Activated CD8-positive, alpha-beta T cell treated with anti-CD3 and anti-CD28 coated beads, Interleukin-2, amount 10 ng/mL, durations not matched to agents 7 days and 5 days (primary cell): ENCODE measurements at regions of chr6 and their contacts with region 1.

Region 1: GRCh38 chr6:105431226-105431625 is 28.3 kb upstream of the PREP start:
- DNase-seq: peak; percentile 51
- ATAC-seq: no peak
- H3K4me3 Mint-ChIP-seq: no peak overlapping the region
- H3K27ac Mint-ChIP-seq: no peak overlapping the region
- H3K4me1 Mint-ChIP-seq: no peaks in the 10 kb centered on the region
- H3K27me3 Mint-ChIP-seq: peaks cover 12% of the 10 kb centered on the region

Region 2: GRCh38 chr6:105087571-105088211 is 343.5 kb before region 1 on chr6:
- CTCF ChIA-PET with region 1: interaction called, 17 read pairs
- POLR2A ChIA-PET with region 1: no interaction called
- DNase-seq: peak; percentile 53
- ATAC-seq: no peak
- H3K4me3 Mint-ChIP-seq: no peak overlapping the region
- H3K27ac Mint-ChIP-seq: no peak overlapping the region
- H3K4me1 Mint-ChIP-seq: no peaks in the 10 kb centered on the region
- H3K27me3 Mint-ChIP-seq: peaks cover 11% of the 10 kb centered on the region

Region 3: DNA sequence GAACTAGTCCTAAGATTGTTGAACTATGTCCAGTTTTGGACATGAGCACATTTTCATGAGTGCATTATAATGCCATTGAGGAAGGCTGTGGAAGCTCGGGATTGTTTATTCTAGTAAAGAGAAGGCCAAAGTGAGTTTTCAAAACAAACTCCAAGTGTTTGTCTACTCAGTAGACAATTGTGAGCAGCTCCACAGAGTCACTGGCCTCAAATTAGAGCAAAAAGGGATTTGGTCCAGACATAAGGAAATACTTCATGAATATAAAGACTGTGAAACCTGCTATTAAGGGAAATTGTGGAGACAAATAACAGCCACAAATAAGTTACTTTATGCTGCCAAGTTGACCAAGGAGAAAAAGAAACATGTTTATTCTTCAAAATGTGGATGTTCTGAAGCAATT is 14.3 kb after region 1 on chr6:
- CTCF ChIA-PET with region 1: interaction called, 23 read pairs
- POLR2A ChIA-PET with region 1: no interaction called
- DNase-seq: no peak
- ATAC-seq: no peak
- H3K4me3 Mint-ChIP-seq: no peak overlapping the region
- H3K27ac Mint-ChIP-seq: no peak overlapping the region
- H3K4me1 Mint-ChIP-seq: no peaks in the 10 kb centered on the region
- H3K27me3 Mint-ChIP-seq: peaks cover 2% of the 10 kb centered on the region

Region 4: DNA sequence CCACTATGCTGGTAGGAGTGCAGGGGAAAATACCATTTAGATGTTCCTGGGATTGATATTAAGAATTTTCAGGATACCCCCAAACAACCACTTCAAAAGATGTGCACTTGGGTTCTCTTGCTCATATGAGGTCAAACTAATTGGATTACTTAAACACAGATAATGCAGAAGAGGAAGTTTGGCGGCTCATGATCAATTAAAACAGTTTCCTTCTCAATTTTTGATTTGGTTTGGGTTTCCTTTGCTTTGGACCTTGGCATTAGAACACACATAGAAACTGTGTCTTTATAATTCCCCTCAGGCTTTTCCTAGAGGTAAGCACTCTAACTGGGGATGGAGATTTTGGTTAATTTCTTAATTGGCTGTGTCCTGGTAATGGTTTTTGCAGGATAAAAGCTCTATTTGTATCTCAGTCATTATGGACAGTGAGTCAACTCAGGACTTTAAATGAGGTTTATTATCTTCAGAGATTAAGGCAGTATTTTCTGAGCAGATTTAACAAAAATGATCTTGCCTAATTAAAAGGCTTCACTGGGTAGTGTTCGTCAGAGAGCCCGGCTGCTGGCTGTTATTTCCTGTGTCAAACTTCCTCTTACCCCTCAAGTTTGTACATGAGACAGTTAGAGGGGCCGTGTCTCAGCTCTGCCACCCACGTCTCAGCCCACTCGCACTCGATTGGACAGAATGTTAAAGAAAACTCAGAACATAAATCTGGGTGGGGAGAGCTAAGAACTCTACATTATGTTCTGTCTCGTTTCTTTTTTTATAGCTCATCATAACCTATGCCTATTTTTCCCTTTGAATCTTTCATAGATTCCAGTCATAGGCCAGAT is 21.9 kb after region 1 on chr6:
- CTCF ChIA-PET with region 1: interaction called, 26 read pairs
- POLR2A ChIA-PET with region 1: no interaction called
- DNase-seq: peak; percentile 59
- ATAC-seq: peak; percentile 93
- H3K4me3 Mint-ChIP-seq: peak overlapping the region; percentile 45
- H3K27ac Mint-ChIP-seq: peak overlapping the region; percentile 72
- H3K4me1 Mint-ChIP-seq: peaks cover 17% of the 10 kb centered on the region
- H3K27me3 Mint-ChIP-seq: peaks cover 4% of the 10 kb centered on the region

Region 5: GRCh38 chr6:105484238-105485161 is 53.3 kb after region 1 on chr6:
- CTCF ChIA-PET with region 1: interaction called, 29 read pairs
- POLR2A ChIA-PET with region 1: no interaction called
- DNase-seq: no peak
- ATAC-seq: peak; percentile 51
- H3K4me3 Mint-ChIP-seq: peak overlapping the region; percentile 12
- H3K27ac Mint-ChIP-seq: peak overlapping the region; percentile 7
- H3K4me1 Mint-ChIP-seq: peaks cover 47% of the 10 kb centered on the region
- H3K27me3 Mint-ChIP-seq: peaks cover 2% of the 10 kb centered on the region

Region 6: DNA sequence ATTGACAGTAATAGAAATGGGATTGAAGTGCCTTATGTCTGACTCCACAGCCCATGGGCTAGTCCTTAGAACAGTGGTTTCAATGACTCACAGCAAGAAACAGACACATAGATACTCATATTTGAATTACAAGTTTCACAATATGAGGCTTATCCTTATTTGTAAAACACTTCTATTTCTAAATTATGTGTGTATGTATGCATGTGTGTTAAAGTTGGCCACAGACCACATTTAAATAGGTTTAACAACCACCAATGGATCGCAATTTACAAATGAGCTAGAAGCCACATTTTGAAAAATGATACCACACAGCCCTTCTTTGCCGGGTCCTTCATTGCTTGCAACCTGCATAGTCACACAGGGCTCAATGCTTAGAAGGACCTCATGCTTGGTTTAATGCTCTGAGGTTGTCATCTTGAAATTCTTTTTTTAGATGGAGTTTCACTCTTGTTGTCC is 129.4 kb after region 1 on chr6:
- CTCF ChIA-PET with region 1: no interaction called
- POLR2A ChIA-PET with region 1: no interaction called
- DNase-seq: no peak
- ATAC-seq: peak; percentile 36
- H3K4me3 Mint-ChIP-seq: no peak overlapping the region
- H3K27ac Mint-ChIP-seq: no peak overlapping the region
- H3K4me1 Mint-ChIP-seq: peaks cover 4% of the 10 kb centered on the region
- H3K27me3 Mint-ChIP-seq: peaks cover 12% of the 10 kb centered on the region

Region 7: DNA sequence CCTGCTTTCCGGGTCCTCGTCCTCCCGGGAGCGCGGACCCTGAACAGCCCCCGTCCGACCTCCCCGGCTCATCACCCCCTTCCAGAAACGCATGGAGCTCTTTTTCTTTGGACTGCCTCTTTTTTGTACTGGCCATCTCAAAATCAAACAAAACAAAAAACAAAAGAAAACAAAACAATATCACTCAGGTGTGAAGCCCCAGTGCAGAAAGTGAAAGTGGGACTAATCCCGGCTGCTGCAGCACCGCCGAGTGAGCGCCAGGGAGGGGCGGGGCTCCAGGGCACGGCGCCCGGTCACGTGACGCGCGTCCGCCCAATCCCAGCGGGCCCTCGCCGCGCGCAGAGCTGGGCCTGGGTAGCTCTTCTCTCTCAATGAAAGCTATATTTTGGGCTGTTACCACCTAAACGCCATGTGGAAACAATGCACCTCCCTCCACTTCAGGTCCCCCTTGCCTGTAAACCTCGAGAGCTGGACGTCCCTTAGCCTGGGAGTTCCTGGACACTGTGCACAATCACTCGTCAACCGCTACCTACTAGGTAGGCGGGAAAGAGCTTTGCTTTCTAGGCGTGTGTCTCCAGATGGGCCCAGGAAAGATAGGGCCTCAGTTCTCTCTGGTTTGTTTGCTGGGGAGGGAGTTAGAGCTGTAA is 561.2 kb after region 1 on chr6:
- CTCF ChIA-PET with region 1: interaction called, 10 read pairs
- POLR2A ChIA-PET with region 1: no interaction called
- DNase-seq: peak; percentile 92
- ATAC-seq: peak; percentile 90
- H3K4me3 Mint-ChIP-seq: peak overlapping the region; percentile 95
- H3K27ac Mint-ChIP-seq: peak overlapping the region; percentile 90
- H3K4me1 Mint-ChIP-seq: peaks cover 49% of the 10 kb centered on the region
- H3K27me3 Mint-ChIP-seq: peaks cover 64% of the 10 kb centered on the region

Region 8: DNA sequence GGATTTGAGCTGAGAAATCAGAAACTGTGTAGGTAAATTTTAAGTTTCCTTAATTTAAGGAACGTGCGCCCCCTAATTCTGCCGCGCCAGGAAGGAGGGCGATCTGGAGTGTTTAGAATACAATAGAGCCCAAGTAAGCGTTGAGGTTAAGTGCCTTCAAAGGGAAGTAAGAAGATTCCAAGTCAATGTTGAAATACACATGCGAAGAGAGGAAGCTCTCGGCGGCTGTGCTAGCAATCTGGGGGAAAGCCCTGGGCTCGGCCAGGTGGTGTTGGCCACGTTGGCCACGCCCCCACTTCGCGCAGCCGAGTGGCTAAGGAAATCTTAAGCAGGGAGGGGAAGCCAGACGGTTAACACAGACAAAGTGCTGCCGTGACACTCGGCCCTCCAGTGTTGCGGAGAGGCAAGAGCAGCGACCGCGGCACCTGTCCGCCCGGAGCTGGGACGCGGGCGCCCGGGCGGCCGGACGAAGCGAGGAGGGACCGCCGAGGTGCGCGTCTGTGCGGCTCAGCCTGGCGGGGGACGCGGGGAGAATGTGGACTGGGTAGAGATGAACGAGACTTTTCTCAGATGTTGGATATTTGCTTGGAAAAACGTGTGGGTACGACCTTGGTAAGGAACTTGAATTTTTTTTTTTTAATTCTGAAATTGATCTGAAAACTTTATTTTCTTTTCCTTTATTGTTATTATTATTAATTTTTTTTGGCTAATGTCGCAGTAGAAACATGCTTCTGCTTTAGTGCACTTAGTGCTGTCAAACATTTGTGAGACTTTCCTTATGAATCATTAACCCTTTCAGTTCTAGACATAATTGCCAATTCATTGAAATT is 655.0 kb after region 1 on chr6 and contains the start of gene PRDM1:
- CTCF ChIA-PET with region 1: interaction called, 19 read pairs
- POLR2A ChIA-PET with region 1: no interaction called
- DNase-seq: peak; percentile 87
- ATAC-seq: peak; percentile 96
- H3K4me3 Mint-ChIP-seq: peak within 1 kb of the TSS; percentile 84
- H3K27ac Mint-ChIP-seq: peak within 1 kb of the TSS; percentile 70
- H3K4me1 Mint-ChIP-seq: peaks cover 70% of the 10 kb centered on the region
- H3K27me3 Mint-ChIP-seq: peaks cover 30% of the 10 kb centered on the region
- total RNA-seq, gene PRDM1: 14.4 to 14.7 TPM